Activated T-helper 1 cell treated with anti-CD3 and anti-CD28 coated beads, Interleukin-12 subunit alpha, Interleukin-12 subunit beta, Interleukin-2, Interleukin-4 antibody, amounts not matched to agents 30 ng/mL and 10 ng/mL and 1 ng/mL, durations not matched to agents 14 hours and 24 hours and 36 hours (primary cell): ENCODE measurements at regions of chr2 and their contacts with region 1.

Region 1: DNA sequence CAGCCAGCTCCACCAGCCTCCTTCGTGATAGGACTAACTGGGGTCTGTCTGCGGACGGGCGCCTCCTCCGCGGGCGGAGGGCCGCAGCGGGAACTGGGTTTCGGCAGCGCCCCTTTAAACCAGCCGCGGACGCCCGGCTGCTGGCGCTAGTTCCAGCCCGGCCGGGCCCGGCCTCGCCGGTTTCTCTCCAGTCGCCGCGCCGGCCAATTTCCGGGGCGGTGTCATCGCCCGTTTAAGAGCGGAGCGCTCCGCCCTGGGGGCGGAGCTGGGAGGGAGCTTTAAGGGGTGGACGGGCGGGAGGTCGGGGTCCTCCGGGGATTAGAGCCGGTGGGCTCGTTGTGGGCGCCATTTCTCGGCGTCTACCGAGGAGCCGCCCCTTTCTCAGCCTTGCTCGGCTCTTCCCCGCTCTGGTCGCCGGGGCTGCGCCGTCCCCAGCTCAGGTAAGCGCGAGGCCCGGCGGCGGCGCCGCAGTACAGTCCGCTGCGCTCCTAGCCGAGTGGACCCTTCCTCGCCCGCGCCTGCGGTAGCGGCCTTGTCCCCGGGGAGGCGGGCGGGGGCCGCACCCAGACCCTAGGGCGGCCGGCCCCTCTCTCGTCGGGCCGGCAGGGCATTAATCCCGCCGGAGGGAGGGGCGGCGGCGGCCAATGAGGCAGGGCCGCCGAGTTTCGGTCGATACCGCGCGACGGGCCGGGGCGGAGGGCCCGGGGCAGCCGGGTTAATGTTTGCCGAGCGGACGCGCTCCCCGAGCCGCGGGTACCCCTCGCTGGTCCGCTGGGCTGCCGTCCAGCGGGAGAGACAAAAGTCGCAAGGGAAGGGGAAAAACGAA is at the start of gene EPB41L5:
- DNase-seq: peak; percentile 75
- H3K4me3 Mint-ChIP-seq: peak within 1 kb of the TSS; percentile 78
- H3K27ac Mint-ChIP-seq: no peak within 1 kb of the TSS
- H3K4me1 Mint-ChIP-seq: peaks cover 7% of the 10 kb centered on the region
- H3K27me3 Mint-ChIP-seq: peaks cover 11% of the 10 kb centered on the region
- total RNA-seq, gene EPB41L5: 1.2 TPM in 2 replicates

Region 2: DNA sequence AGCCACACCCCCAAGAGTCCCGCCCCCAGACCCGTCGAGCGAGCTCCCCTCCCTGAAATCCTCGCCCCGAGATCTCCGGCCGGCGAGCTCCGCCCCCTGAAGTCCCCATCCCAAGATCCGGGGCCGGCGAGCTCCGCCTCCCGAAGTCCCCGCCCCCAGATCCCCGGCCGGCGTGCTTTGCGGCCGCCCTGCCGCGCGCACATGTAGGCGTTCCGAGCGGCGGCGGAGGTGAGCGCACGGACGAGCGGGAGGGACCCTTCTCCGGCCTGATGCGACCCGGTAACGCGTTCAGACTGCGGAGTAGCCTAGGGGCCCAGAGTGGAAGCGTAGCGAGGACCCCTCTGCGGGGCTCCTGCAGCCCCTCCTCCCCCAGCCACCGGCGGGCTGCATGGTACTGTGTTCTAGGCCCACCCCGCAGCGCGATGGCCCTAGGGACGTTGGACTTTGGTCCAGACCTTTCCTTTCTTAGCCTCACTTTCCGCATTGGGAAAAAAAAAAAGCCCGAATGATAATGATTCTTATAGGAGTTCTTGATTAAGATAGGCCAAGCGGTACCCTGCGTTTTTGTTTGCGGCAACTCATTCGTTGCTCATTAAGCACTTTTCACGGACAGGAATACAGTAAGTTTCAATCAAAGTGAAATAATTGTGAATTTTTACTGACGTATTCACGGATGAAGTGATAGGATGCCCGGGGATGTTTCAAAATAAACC is 333.8 kb before region 1 on chr2 and contains the start of gene TMEM177:
- intact Hi-C with region 1: loop called (anchors 1 kb)
- DNase-seq: peak; percentile 90
- H3K4me3 Mint-ChIP-seq: peak within 1 kb of the TSS; percentile 96
- H3K27ac Mint-ChIP-seq: peak within 1 kb of the TSS; percentile 85
- H3K4me1 Mint-ChIP-seq: peaks cover 25% of the 10 kb centered on the region
- H3K27me3 Mint-ChIP-seq: peaks cover 4% of the 10 kb centered on the region
- total RNA-seq, gene TMEM177: 16.6 and 17.4 TPM in 2 replicates

Region 3: DNA sequence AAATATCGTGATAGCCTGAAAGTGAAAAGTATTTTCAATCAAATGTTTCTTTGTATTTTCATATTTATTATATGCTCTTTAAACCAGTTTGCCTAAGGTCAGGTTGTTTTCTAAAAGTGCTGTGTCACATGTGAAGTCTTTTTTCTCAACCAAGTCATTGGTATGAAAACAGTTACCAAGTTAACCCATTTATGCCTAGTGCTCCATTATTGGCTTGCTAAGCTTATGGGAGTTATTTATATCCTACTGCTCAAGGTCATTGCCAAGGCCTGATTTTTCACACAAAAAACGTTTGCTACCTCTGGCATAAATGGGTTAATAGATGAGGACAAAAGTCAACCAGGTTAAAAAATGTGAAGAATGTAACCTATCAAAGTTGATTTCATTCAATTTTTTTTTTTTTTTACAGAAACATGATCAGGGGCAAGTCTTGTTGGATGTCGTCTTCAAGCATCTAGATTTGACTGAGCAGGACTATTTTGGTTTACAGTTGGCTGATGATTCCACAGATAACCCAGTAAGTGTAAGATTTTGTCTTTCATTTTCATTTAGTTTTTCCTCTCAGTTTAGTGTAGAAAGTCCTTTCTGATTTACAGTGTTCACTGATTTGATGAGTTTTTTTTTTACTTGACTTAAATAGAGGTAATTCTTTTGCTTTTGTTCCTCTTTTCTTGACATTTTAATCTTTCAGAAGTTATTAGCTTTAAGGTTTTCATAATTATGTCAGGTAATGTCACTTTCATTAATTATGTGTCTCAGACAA is 150.7 kb before region 1 on chr2:
- intact Hi-C with region 1: loop called (anchors 2 kb)
- DNase-seq: no peak
- H3K4me3 Mint-ChIP-seq: peak overlapping the region; percentile 34
- H3K27ac Mint-ChIP-seq: peak overlapping the region; percentile 74
- H3K4me1 Mint-ChIP-seq: peaks cover 43% of the 10 kb centered on the region
- H3K27me3 Mint-ChIP-seq: peaks cover 3% of the 10 kb centered on the region

Region 4: GRCh38 chr2:119897736-119898395 is 115.1 kb before region 1 on chr2:
- intact Hi-C with region 1: no loop called
- DNase-seq: no peak
- H3K4me3 Mint-ChIP-seq: no peak overlapping the region
- H3K27ac Mint-ChIP-seq: no peak overlapping the region
- H3K4me1 Mint-ChIP-seq: no peaks in the 10 kb centered on the region
- H3K27me3 Mint-ChIP-seq: no peaks in the 10 kb centered on the region

Region 5: DNA sequence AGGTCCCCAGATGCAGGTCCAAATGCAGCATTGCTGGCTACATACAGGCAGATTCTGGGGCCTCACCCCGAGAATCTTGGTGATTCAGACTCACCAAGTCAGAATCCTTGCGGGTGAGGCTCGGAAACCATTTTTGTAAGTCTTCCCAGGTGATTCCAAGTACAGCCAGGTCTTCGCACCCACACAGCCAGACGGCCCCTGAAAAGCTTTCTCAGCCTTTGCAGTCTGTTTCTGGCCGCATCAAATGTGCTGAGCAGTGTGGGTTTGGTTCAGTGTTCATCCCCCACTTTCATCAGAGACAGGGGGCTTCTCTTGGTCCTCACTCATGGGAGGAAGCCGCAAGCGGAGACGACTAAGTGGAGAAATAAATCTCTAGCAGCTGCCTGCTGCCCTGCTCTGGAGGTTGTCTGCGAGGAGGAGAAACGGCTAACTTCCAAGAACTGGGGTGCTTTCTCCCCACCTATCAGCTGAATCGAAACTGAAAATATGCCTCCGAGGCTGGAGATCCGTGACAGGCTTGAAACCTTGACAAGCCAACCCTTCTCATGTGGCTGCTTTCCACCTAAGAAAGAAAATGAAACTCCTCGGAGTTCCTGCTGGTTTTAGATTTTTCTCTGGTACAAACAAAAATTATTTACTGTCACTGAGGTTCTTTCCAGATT is 219.1 kb after region 1 on chr2:
- intact Hi-C with region 1: loop called (anchors 5 kb)
- DNase-seq: peak; percentile 81
- H3K4me3 Mint-ChIP-seq: peak overlapping the region; percentile 91
- H3K27ac Mint-ChIP-seq: peak overlapping the region; percentile 98
- H3K4me1 Mint-ChIP-seq: peaks cover 59% of the 10 kb centered on the region
- H3K27me3 Mint-ChIP-seq: no peaks in the 10 kb centered on the region

Region 6: GRCh38 chr2:120312861-120313694 is 300.1 kb after region 1 on chr2:
- intact Hi-C with region 1: loop called (anchors 2 kb)
- DNase-seq: peak; percentile 64
- H3K4me3 Mint-ChIP-seq: peak overlapping the region; percentile 77
- H3K27ac Mint-ChIP-seq: peak overlapping the region; percentile 4
- H3K4me1 Mint-ChIP-seq: peaks cover 42% of the 10 kb centered on the region
- H3K27me3 Mint-ChIP-seq: peaks cover under 1% of the 10 kb centered on the region